A549 (cell line): ENCODE measurements at regions of chr3 and their contacts with region 1.

Region 1: DNA sequence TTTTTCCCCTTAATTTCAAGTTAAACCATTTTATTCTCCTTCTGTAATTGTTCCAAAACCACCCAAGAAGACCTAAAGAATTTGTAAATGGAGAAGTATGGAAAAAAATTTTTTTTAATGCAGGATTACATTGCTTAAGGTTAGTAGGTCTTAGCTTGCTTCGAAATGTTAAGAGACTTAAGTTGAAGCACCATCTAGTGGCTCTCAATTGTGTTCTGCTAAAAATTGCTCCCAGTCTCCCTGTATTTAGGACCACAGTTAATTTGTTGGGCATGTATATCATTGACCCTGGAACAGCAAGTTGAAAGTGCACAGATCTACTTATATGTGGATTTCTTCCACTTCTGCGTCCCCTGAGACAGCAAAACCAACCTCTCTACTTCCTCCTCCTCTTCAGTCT is 32.4 kb downstream of the CD200R1L start:
- DNase-seq: peak; percentile 33 to 82
- ATAC-seq: peak; percentile 82 to 93; a peak in 5 of 6 replicates
- H3K4me3 ChIP-seq: no peak overlapping the region
- H3K27ac ChIP-seq: peak overlapping the region; percentile 61 to 79
- H3K4me1 ChIP-seq: peaks cover 40% of the 10 kb centered on the region
- CTCF ChIP-seq: peak; percentile 83
- EP300 ChIP-seq: no peak
- POLR2A ChIP-seq: no peak
- RAD21 ChIP-seq: peak; percentile 90 to 96

Region 2: DNA sequence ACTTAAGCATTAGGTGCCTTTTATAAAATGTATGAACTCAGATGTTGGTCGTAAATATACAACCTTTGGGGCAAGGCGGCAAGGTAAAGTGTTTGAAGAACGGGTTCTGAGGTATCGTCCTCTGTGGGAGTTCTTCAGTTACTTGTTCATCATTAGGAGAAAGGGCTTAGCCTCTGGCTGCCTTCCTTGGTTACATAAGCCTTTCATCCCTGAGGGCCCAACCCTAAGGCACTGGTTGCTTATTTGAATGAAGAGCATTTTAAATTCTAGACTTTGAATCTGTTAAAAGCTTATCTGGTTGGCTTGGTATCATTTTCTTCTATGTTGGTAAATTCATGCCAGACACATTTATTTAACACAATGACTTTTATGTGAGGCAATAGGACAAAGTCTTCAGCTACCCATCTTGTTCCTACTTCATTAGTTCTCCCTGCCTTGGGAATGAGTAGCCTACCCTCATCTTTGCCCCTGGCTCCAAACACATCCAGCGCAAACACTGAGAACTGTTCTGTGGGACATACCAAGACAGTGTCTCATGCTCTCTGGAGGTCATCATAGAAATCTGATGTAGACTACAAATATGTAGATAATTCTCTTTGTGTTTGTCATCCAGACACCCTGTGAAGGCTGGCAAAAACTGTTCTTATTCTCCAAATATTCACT is 160.9 kb before region 1 on chr3:
- CTCF ChIA-PET with region 1: interaction called, 27 read pairs
- POLR2A ChIA-PET with region 1: interaction called, 3 read pairs
- DNase-seq: peak; percentile 92 to 97
- ATAC-seq: peak; percentile 96 to 97
- H3K4me3 ChIP-seq: no peak overlapping the region
- H3K27ac ChIP-seq: peak overlapping the region; percentile 92 to 99
- H3K4me1 ChIP-seq: peaks cover 78% of the 10 kb centered on the region
- CTCF ChIP-seq: no peak
- EP300 ChIP-seq: peak; percentile 89 to 93
- POLR2A ChIP-seq: no peak
- RAD21 ChIP-seq: peak; percentile 30 to 52; a peak in 4 of 5 replicates

Region 3: DNA sequence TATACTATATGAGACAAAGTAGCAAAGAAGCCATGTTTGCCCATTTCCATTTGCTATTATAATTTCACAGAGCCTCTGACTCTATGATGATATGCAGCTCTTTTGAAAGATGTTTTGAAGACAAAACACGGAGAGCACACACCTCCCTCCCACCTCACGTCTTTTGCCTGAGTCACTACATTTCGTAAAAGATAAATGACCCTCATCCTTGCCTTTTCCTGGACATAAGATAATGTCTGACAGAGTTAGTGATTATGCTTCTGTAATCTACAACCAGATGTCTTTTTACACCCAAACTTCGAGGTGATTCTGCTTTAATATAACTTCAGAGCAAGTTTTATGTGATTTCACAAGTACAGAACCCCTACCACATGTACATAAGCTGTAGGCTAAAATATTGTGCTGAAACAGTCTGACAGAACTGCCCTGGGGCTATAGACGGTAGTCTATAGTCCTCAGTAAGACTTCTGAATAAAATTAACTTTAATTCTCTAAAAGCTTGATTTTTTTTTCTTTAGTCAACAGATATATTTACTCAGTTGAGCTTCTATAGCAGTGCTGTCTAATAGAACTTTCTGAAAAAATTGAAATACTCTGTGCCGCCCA is 67.5 kb before region 1 on chr3:
- CTCF ChIA-PET with region 1: interaction called, 13 read pairs
- POLR2A ChIA-PET with region 1: no interaction called
- DNase-seq: peak in 1 of 2 experiments; percentile 79
- ATAC-seq: peak; percentile 85 to 86
- H3K4me3 ChIP-seq: no peak overlapping the region
- H3K27ac ChIP-seq: peak overlapping the region; percentile 78 to 87
- H3K4me1 ChIP-seq: peaks cover 53% of the 10 kb centered on the region
- CTCF ChIP-seq: no peak
- EP300 ChIP-seq: peak in 1 of 2 experiments; percentile 47; a peak in 1 of 5 replicates
- POLR2A ChIP-seq: no peak
- RAD21 ChIP-seq: no peak

Region 4: GRCh38 chr3:112773864-112774590 is 40.2 kb before region 1 on chr3:
- CTCF ChIA-PET with region 1: interaction called, 27 read pairs
- POLR2A ChIA-PET with region 1: interaction called, 4 read pairs
- DNase-seq: peak; percentile 48 to 91
- ATAC-seq: peak; percentile 81 to 84
- H3K4me3 ChIP-seq: no peak overlapping the region
- H3K27ac ChIP-seq: peak overlapping the region; percentile 87 to 96
- H3K4me1 ChIP-seq: peaks cover 71% of the 10 kb centered on the region
- CTCF ChIP-seq: no peak
- EP300 ChIP-seq: peak; percentile 58 to 66; a peak in 2 of 5 replicates
- POLR2A ChIP-seq: no peak
- RAD21 ChIP-seq: peak in 1 of 2 experiments; percentile 24; a peak in 1 of 5 replicates

Region 5: GRCh38 chr3:112799946-112800345 is 14.3 kb before region 1 on chr3:
- CTCF ChIA-PET with region 1: interaction called, 10 read pairs
- POLR2A ChIA-PET with region 1: no interaction called
- DNase-seq: no peak
- ATAC-seq: no peak
- H3K4me3 ChIP-seq: no peak overlapping the region
- H3K27ac ChIP-seq: peak overlapping the region; percentile 28 to 63; a peak in 4 of 6 replicates
- H3K4me1 ChIP-seq: peaks cover 24% of the 10 kb centered on the region
- CTCF ChIP-seq: no peak
- EP300 ChIP-seq: no peak
- POLR2A ChIP-seq: no peak
- RAD21 ChIP-seq: no peak

Region 6: GRCh38 chr3:112931736-112932521 is 117.7 kb after region 1 on chr3:
- CTCF ChIA-PET with region 1: no interaction called
- POLR2A ChIA-PET with region 1: no interaction called
- DNase-seq: no peak
- ATAC-seq: no peak
- H3K4me3 ChIP-seq: no peak overlapping the region
- H3K27ac ChIP-seq: no peak overlapping the region
- H3K4me1 ChIP-seq: no peaks in the 10 kb centered on the region
- CTCF ChIP-seq: no peak
- EP300 ChIP-seq: no peak
- POLR2A ChIP-seq: no peak
- RAD21 ChIP-seq: no peak

Region 7: DNA sequence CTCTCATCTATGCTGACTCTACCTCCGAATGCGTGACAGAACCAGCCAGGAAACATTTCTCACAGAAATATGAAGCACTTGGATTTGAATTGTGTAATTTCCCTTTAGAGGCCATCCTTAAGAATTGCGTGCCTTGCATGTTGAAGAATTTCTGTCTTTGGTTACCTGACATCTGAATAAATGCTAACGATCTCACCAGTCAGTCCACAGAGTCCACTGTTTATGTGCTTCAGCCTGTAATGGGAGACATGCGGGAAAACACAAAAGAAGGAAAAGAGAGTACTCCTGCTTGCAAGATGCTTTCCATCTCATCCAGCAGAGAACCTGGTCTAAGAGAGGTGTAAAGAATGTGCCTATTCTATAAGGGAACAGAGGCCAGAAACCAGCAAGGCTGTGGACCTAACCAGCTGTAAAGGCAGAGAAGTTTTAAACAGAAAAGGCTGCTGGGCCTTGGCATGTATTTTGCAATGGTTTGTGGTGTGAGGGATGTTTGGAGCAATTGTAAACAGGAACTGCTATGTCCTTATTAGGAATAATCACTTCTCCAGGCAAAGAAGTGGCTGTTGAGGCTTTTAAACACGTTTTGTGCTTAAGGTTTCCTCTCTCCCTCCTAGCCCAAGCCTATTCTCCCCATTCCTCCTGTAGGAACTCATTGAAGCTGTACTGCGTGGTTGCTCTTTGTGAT is 360.7 kb after region 1 on chr3:
- CTCF ChIA-PET with region 1: no interaction called
- POLR2A ChIA-PET with region 1: no interaction called
- DNase-seq: no peak
- ATAC-seq: no peak
- H3K4me3 ChIP-seq: no peak overlapping the region
- H3K27ac ChIP-seq: no peak overlapping the region
- H3K4me1 ChIP-seq: no peaks in the 10 kb centered on the region
- CTCF ChIP-seq: no peak
- EP300 ChIP-seq: no peak
- POLR2A ChIP-seq: no peak
- RAD21 ChIP-seq: no peak